Activated CD4-positive, alpha-beta memory T cell treated with anti-CD3 and anti-CD28 coated beads for 36 hours (primary cell): ENCODE measurements at regions of chr1 and their contacts with region 1.

Region 1: DNA sequence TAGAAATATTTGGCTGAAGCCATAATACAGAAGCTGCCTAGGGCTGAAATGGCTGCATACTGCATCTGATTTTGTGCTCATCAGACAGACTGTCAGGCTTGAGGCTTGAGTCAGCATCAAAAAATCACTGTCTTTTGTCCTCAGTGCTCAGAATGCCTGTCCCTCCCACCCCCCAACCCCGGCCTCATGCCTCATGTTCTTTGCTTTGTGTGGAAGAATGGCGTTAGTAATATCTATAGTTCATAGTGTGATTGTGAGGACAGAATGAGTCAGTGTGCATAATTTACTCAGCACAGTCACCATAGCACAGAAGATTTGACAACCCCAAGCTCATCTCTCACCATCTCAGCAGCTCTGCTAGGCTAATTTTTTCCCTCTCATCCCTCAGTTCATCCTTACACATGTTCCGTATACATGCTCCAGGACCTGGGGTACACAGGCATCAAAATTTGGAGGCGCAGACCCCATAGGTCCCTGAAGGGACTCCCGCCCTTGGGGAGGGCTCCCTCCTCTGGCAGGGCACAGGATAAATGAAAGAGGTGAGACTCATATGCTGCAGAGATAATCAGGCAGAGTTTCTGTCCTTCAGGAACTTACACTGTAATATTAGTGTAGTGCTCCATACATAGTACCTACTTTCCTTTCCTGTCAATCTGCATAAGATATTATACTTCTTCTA is 159.1 kb upstream of the C8B start:
- DNase-seq: peak; percentile 28
- H3K4me3 Mint-ChIP-seq: no peak overlapping the region
- H3K27ac Mint-ChIP-seq: no peak overlapping the region
- H3K4me1 Mint-ChIP-seq: peaks cover 2% of the 10 kb centered on the region
- H3K27me3 Mint-ChIP-seq: no peaks in the 10 kb centered on the region

Region 2: DNA sequence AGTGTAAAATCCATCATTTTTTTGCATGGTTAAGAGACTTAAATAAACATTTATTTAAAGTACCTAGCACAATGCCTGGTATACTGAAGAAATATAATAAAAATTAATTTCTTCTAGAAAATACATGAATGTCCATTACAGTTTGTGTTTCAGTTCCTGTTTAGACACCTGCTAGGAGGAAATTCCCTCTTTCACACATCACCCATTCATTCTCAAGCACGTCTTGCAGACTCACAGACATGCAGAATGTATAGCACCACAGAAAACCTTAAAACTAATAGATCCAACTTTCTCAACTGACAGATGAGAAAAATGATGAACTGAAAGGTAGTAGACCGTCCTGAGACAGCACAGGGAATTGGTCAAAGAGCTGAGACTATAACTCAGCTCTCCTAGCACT is 13.1 kb after region 1 on chr1:
- CTCF ChIA-PET with region 1: no interaction called
- POLR2A ChIA-PET with region 1: no interaction called
- intact Hi-C with region 1: no loop called
- DNase-seq: no peak
- H3K4me3 Mint-ChIP-seq: no peak overlapping the region
- H3K27ac Mint-ChIP-seq: no peak overlapping the region
- H3K4me1 Mint-ChIP-seq: no peaks in the 10 kb centered on the region
- H3K27me3 Mint-ChIP-seq: no peaks in the 10 kb centered on the region

Region 3: GRCh38 chr1:57167997-57168396 is 43.1 kb after region 1 on chr1:
- CTCF ChIA-PET with region 1: no interaction called
- POLR2A ChIA-PET with region 1: no interaction called
- intact Hi-C with region 1: loop called (anchors 1 kb)
- DNase-seq: no peak
- H3K4me3 Mint-ChIP-seq: no peak overlapping the region
- H3K27ac Mint-ChIP-seq: no peak overlapping the region
- H3K4me1 Mint-ChIP-seq: peaks cover 4% of the 10 kb centered on the region
- H3K27me3 Mint-ChIP-seq: no peaks in the 10 kb centered on the region

Region 4: GRCh38 chr1:57307392-57308170 is 182.7 kb after region 1 on chr1:
- CTCF ChIA-PET with region 1: no interaction called
- POLR2A ChIA-PET with region 1: no interaction called
- intact Hi-C with region 1: loop called (anchors 1 kb)
- DNase-seq: peak; percentile 71
- H3K4me3 Mint-ChIP-seq: peak overlapping the region; percentile 21
- H3K27ac Mint-ChIP-seq: peak overlapping the region; percentile 55
- H3K4me1 Mint-ChIP-seq: peaks cover 12% of the 10 kb centered on the region
- H3K27me3 Mint-ChIP-seq: no peaks in the 10 kb centered on the region